Heart right ventricle (tissue), 16 donors: ENCODE measurements at regions of chr5 and their contacts with region 1.

Region 1: GRCh38 chr5:180950291-180950949 is 38.2 kb upstream of the BTNL3 start:
- DNase-seq: no peak
- ATAC-seq: no peak
- H3K4me3 ChIP-seq: no peak overlapping the region
- H3K27ac ChIP-seq: no peak overlapping the region
- H3K4me1 ChIP-seq: no peaks in the 10 kb centered on the region
- H3K27me3 ChIP-seq: no peaks in the 10 kb centered on the region
- CTCF ChIP-seq: no peak

Region 2: DNA sequence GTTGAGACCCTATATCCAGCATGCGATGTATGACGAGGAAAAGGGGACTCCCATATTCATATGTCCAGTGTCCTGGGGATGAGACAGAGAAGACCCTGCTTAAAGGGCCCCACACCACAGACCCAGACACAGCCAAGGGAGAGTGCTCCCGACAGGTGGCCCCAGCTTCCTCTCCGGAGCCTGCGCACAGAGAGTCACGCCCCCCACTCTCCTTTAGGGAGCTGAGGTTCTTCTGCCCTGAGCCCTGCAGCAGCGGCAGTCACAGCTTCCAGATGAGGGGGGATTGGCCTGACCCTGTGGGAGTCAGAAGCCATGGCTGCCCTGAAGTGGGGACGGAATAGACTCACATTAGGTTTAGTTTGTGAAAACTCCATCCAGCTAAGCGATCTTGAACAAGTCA is 55.4 kb after region 1 on chr5:
- intact Hi-C with region 1: loop called in 2 of 10 experiments (anchors 2 kb)
- DNase-seq: no peak
- ATAC-seq: no peak
- H3K4me3 ChIP-seq: no peak overlapping the region
- H3K27ac ChIP-seq: no peak overlapping the region
- H3K4me1 ChIP-seq: no peaks in the 10 kb centered on the region
- H3K27me3 ChIP-seq: peaks cover 0 to 14% (median 0%) of the 10 kb centered on the region in 7 donors
- CTCF ChIP-seq: no peak

Region 3: DNA sequence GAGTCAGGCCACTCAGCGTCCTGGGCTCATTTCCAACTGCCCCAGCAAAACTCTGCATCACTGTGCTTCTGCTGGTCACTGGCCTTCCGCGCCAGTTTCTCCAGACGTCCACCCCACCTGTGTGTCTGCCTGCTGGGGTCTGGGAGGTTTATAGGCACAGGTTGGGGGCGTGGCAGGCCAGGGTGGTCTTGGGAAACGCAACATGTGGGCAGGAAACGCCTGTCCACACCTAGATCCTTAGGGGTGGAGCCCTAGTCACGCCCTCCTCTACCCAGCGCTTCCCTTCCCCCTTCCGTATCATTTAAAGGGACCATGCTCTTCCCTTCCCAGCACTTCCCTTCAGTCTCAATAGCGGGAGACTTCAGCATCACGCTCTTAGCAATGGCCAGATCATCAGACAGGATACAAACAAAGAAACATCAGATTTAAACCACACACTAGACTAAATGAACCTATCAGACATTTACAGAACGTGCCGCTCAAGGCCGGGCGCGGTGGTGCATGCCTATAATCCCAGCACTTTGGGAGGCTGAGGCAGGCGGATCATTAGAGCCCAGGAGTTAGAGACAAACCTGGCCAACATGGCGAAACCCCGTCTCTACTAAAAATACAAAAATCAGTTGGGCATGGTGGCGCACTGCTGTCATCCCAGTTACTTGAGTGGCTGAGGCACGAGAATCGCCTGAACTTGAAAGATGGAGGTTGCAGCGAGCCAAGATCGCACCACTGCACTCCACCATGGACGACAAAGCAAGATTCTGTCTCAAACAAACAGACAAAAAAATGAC is 77.8 kb after region 1 on chr5:
- intact Hi-C with region 1: loop called in 1 of 10 experiments (anchors 5 kb)
- DNase-seq: no peak
- ATAC-seq: peak in 6 of 8 donors; percentile 25 to 77 (median 51)
- H3K4me3 ChIP-seq: peak overlapping the region in 2 of 10 donors; percentile 10 to 15
- H3K27ac ChIP-seq: peak overlapping the region in 1 of 10 donors; percentile 26
- H3K4me1 ChIP-seq: no peaks in the 10 kb centered on the region
- H3K27me3 ChIP-seq: peaks cover 0 to 14% (median 0%) of the 10 kb centered on the region in 7 donors
- CTCF ChIP-seq: no peak